Aorta (tissue), 5 donors: ENCODE measurements at regions of chr2 and their contacts with region 1.

Region 1: GRCh38 chr2:45993476-45993991 is 303.7 kb upstream of the EPAS1 start:
- DNase-seq: peak in 1 of 2 donors; percentile 69
- ATAC-seq: peak; percentile 86
- H3K4me3 ChIP-seq: no peak overlapping the region
- H3K27ac ChIP-seq: peak overlapping the region in 1 of 2 donors; percentile 68
- H3K4me1 ChIP-seq: no peaks in the 10 kb centered on the region
- H3K27me3 ChIP-seq: no peaks in the 10 kb centered on the region

Region 2: GRCh38 chr2:45649858-45650811 is 343.4 kb before region 1 on chr2:
- intact Hi-C with region 1: loop called in 1 of 2 experiments (anchors 5 kb)
- DNase-seq: peak; percentile 82 to 91
- ATAC-seq: peak; percentile 75
- H3K4me3 ChIP-seq: peak overlapping the region; percentile 72 to 88
- H3K27ac ChIP-seq: peak overlapping the region; percentile 88 to 93
- H3K4me1 ChIP-seq: no peaks in the 10 kb centered on the region
- H3K27me3 ChIP-seq: no peaks in the 10 kb centered on the region